AG04449 (cell line): ENCODE measurements at regions of chr20 and their contacts with region 1.

Region 1: DNA sequence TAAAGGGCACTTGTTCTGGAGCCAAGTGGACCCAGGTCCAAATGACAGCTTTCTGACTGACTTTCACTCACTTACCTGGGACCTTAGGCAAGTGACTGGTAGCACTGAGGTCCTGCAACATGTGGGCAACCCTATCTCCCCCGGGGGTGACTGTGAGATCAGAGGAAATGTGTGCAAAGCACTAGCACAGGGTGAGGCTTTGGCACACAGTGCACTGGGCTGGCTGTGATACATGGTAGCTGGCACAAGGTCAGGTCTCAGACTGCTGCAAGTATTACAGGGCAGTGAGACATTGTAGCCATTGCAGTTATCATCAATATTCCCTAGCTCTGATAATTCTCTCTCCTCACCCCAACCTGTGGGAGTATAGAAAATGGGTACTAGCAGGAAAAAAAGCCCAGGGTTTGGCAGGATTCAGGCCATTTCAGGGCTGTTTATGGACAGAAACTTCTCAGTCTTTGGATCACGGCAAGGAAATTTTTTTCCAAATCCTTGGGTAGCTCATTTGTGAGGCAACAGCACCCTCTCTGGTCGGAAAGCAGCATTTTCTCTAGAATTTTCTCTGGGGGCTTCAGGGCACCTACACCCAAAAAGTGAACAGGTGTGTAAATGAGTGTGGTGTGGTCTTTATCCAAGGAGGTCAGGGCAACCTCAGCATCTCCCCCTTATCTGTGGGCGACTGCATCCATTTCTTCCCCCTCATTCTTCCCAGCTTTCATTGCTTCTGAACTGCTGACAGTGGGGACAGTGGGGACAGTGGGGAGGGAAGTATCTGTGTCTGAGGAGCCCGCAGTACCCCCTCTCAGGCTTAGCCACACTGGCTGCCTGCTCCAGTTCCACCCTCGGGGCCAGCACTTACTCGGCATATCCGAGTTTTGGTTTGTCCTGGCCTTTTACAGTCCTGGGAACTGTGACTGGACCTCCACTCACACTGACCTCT is 148.7 kb upstream of the PHACTR3 start:
- DNase-seq: no peak
- H3K4me3 ChIP-seq: no peak overlapping the region
- CTCF ChIP-seq: peak; percentile 57

Region 2: GRCh38 chr20:58864350-58864749 is 591.3 kb before region 1 on chr20:
- CTCF ChIA-PET with region 1: interaction called, 89 read pairs
- POLR2A ChIA-PET with region 1: no interaction called
- DNase-seq: no peak
- H3K4me3 ChIP-seq: no peak overlapping the region
- CTCF ChIP-seq: no peak

Region 3: DNA sequence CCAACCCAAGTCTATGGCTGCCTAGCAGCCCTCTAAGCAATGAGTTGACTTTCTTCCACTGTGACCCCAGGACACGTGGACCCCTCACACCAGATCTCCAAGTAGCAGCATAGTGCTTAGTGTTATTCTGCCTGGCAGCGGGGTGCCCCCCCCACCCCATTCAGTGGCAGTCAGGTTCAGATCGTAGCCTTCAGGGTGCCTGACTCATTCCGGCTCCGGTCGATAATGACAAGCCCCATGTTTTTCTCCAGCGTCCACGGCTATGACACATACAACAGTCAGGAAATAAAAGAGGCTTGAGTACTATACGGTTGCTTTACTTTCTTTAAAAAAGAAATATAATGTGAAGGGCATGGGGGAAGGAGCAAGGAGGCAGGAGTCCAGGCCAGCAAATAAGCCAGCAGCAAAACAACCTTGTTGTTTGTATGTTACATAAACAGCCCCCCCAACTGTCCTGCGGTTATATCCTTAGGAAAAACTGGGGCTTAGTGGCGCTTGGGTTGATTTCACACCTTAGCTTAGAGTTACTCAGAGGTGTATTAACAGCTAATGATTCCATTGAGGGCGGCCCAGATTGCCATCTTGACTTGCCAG is 580.0 kb before region 1 on chr20:
- CTCF ChIA-PET with region 1: interaction called, 89 read pairs
- POLR2A ChIA-PET with region 1: no interaction called
- DNase-seq: no peak
- H3K4me3 ChIP-seq: no peak overlapping the region
- CTCF ChIP-seq: no peak

Region 4: GRCh38 chr20:59087829-59088433 is 367.7 kb before region 1 on chr20:
- CTCF ChIA-PET with region 1: interaction called, 82 read pairs
- POLR2A ChIA-PET with region 1: no interaction called
- DNase-seq: no peak
- H3K4me3 ChIP-seq: no peak overlapping the region
- CTCF ChIP-seq: peak; percentile 81

Region 5: DNA sequence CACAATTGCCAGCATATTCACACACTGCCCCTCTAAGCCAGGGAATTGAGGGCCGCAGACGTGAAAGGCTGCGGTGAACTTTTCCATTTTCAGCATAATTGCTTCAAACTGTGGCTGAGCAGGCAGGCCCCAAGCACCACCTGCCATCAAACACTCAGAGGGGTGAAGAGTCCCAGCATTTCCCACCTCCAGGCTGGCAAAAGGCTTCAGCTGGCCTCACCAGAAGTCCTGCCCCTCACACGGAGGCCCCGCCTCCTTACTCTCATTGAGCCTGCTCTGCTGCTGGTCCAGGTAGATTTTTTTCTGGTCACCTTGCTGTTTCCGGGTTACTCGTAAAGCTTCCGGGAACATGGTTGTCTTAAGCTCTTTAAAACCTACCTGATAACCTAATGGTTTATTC is 361.1 kb before region 1 on chr20:
- CTCF ChIA-PET with region 1: interaction called, 82 read pairs
- POLR2A ChIA-PET with region 1: no interaction called
- DNase-seq: no peak
- H3K4me3 ChIP-seq: no peak overlapping the region
- CTCF ChIP-seq: no peak

Region 6: DNA sequence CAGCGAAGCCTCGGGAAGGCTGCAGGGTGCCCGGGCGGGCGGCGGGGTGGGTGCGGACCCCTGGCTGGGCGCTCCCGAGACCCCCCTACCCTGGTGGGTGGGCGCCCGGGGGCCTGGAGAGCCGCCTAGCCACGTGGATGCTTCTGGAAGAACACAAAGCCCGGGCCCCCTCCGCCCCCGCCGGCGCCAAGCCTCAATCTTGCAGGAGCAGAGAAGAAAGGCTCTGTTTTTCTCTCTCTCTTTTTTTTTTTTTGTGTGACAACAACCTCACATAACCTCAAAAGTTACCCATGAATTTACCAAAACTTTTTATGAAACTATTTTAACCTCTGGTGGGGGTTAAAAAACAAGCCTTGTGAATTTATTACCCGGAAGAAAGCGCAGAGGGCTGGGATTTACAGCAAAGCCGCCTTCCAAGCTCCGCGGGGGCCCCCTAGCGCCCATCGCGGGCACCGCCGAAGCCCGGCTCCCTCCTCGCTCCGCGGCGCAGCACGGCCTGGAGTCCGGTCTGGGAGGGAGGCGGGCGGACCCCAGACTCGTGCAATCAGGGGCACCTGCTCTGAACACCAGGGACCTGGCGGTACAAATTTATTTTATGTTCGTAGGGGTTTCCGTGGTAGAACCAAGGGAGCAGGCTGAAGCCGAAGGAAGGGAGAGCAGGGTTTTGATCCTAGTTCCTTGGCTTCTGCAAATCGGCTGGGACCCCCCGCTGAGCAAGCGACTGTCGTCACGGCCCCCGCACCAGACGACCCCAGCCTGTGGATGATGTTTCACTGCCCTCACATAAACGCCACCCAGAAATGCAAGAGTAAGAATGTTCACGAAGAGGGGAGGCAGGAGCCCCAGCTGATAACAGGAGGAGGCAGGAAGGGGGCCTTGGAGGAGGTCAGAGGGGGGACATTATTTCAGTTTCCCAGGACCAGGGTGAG is 233.2 kb before region 1 on chr20:
- CTCF ChIA-PET with region 1: interaction called, 38 read pairs
- POLR2A ChIA-PET with region 1: no interaction called
- DNase-seq: peak; percentile 12
- H3K4me3 ChIP-seq: peak overlapping the region; percentile 48
- CTCF ChIP-seq: peak; percentile 94

Region 7: GRCh38 chr20:59403261-59403961 is 52.3 kb before region 1 on chr20:
- CTCF ChIA-PET with region 1: interaction called, 12 read pairs
- POLR2A ChIA-PET with region 1: no interaction called
- DNase-seq: no peak
- H3K4me3 ChIP-seq: peak overlapping the region; percentile 23; the same call in 1 of the 2 replicates
- CTCF ChIP-seq: peak; percentile 96